ENCODE measurements at regions of chr9 and their contacts with region 1.

Region 1: DNA sequence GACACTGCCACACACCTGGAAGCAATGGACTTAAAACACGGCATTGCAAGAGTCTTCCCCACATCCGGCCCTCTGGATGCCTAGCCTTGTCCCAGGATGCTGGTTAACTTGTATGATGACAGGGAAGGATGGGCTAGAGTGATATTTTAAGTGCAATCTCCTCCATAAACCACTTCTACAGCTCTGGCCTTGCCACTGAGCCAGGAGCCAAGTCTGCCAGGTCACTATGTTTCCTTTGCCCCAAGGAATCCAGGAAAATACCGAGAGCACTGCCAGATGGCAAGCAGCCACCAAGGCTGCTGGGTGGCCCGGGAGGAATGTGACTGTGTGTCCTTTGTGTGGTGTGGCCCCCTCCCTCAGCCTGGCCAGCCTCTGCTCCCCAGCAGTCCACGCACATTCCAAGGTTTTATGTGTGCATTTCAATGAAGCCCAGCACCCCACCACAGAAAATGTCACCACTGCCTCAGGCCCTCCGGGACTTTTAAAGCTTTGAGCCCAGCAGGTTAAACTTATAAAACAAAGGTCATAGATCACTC is 106.0 kb downstream of the FRMD3 start:
- DNase-seq: no peak
- ATAC-seq: peak; percentile 97
- H3K4me3 ChIP-seq: peak overlapping the region; percentile 12 to 23; a peak in 1 of 4 replicates
- H3K27ac ChIP-seq: peak overlapping the region; percentile 96
- H3K4me1 ChIP-seq: peaks cover 37% of the 10 kb centered on the region
- H3K27me3 ChIP-seq: no peaks in the 10 kb centered on the region
- CTCF ChIP-seq: no peak

Region 2: DNA sequence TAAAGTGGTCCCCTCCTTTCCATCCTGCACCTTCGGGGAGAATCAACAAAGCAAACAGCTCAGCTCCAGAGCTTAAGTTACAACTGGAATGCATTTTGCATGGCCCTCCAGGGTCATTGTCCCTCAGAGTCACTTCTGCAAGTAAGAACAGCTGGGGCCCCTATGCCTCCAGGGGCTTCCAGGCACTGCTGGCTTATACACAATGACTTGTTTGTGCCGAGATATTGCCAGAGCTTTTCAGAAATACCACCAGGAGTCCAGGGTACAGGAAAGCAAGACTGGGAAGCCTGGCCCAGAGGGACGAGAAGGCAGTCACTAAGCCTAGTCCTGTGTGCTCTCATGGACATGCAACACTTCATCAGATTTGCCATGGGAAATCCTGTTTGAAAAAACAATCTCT is 94.7 kb after region 1 on chr9:
- CTCF ChIA-PET with region 1: no interaction called
- POLR2A ChIA-PET with region 1: no interaction called
- in situ Hi-C with region 1: no loop called
- intact Hi-C with region 1: loop called (anchors 5 kb)
- DNase-seq: no peak
- ATAC-seq: peak; percentile 80
- H3K4me3 ChIP-seq: no peak overlapping the region
- H3K27ac ChIP-seq: peak overlapping the region; percentile 77
- H3K4me1 ChIP-seq: peaks cover 33% of the 10 kb centered on the region
- H3K27me3 ChIP-seq: no peaks in the 10 kb centered on the region
- CTCF ChIP-seq: no peak